Calu3 (cell line): ENCODE measurements at regions of chr3 and their contacts with region 1.

Region 1: GRCh38 chr3:188164248-188164687 is 10.3 kb downstream of the LPP start:
- DNase-seq: peak; percentile 90
- H3K4me3 Mint-ChIP-seq: peak overlapping the region; percentile 54
- H3K27ac Mint-ChIP-seq: peak overlapping the region; percentile 87
- H3K4me1 Mint-ChIP-seq: peaks cover 76% of the 10 kb centered on the region
- H3K27me3 Mint-ChIP-seq: no peaks in the 10 kb centered on the region
- CTCF ChIP-seq: no peak

Region 2: DNA sequence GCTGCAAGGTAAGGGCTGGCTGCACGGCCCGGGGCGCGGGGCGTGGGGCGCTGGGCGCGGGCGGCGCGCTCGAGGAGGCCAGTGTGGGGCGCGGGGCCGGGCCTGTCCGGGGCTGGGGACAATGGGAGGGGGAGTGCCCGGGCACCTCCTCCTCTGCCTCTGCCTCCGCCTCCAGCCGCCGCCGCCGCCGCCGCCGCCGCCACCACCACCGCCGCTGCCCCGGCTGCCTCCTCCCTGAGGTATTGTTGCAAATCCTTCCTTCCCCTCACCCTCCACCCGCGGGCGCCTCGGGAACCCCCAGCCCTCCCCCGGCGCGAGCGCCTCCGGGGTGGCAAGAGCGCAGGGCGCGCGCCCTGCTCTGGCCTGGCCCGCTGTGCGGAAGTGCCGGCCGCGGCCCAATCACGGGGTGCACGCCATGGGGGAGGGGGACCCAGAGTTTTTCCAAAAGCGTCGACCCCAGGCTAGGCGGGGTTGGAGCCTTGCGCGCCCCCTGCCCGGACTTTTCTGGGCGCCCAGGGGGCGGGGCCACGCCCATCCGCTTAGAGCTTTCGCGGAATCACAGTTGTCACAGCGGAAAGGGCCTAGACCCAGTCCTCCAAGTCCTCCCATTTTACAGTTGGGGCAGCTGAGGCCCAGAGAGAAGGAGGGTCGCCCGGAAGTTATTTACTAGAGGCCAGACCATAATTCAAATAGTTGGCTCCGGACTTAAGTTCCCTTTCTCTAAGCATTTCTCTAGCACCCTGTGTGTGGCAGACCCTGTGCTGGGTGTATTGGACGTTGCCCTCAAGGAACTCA is 10.1 kb before region 1 on chr3 and contains the start of gene LPP:
- CTCF ChIA-PET with region 1: interaction called, 36 read pairs
- intact Hi-C with region 1: no loop called
- DNase-seq: peak; percentile 97
- H3K4me3 Mint-ChIP-seq: peak within 1 kb of the TSS; percentile 72
- H3K27ac Mint-ChIP-seq: peak within 1 kb of the TSS; percentile 86
- H3K4me1 Mint-ChIP-seq: peaks cover 56% of the 10 kb centered on the region
- H3K27me3 Mint-ChIP-seq: no peaks in the 10 kb centered on the region
- CTCF ChIP-seq: peak; percentile 21
- total RNA-seq, gene LPP: 219 and 264 TPM in 2 replicates

Region 3: DNA sequence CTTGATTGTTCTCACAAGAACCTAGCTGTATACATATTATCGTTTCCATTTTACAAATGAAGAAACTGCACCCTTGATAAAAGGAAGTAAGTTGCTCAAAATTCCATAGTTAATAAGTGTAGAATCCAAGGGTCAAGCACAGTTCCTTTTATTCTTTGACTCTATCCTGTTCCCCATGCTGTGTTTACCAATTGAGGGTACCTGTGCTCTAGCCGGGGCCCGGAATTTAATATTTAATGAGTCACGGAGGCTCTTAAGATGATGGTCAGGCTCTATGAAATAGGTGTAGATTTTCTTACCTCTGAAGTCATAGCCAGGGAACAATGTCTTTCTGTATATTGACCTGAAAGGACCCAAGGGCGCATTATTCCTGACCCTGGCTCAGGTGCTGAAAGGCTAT is 54.9 kb after region 1 on chr3:
- CTCF ChIA-PET with region 1: interaction called, 7 read pairs
- intact Hi-C with region 1: loop called (anchors 2 kb)
- DNase-seq: peak; percentile 80
- H3K4me3 Mint-ChIP-seq: no peak overlapping the region
- H3K27ac Mint-ChIP-seq: peak overlapping the region; percentile 62
- H3K4me1 Mint-ChIP-seq: peaks cover 88% of the 10 kb centered on the region
- H3K27me3 Mint-ChIP-seq: no peaks in the 10 kb centered on the region
- CTCF ChIP-seq: no peak

Region 4: GRCh38 chr3:188270423-188270972 is 106.2 kb after region 1 on chr3:
- CTCF ChIA-PET with region 1: interaction called, 6 read pairs
- intact Hi-C with region 1: loop called (anchors 1 kb)
- DNase-seq: peak; percentile 80
- H3K4me3 Mint-ChIP-seq: peak overlapping the region; percentile 24
- H3K27ac Mint-ChIP-seq: peak overlapping the region; percentile 88
- H3K4me1 Mint-ChIP-seq: peaks cover 55% of the 10 kb centered on the region
- H3K27me3 Mint-ChIP-seq: no peaks in the 10 kb centered on the region
- CTCF ChIP-seq: no peak

Region 5: DNA sequence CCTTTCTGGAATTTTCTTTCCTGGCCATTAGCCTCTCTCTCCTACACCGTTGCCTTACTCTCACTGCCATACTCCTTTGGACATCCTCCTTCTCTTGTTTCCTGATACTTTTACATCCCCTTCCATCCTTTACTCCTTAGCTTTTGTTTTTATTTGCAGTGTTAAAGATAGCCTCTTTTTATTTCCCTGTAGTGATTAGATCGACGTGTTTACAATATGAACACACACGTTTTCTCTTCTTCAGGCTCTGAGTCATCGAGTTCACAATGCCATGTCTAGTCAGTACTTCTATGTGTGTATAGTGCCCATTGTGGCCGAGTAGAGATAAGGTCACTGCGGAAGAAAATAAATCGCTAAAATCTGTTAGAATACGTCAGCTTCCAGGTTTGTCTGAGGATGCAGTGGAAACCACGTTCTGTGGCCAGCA is 198.2 kb after region 1 on chr3:
- CTCF ChIA-PET with region 1: no interaction called
- intact Hi-C with region 1: loop called (anchors 2 kb)
- DNase-seq: peak; percentile 66
- H3K4me3 Mint-ChIP-seq: peak overlapping the region; percentile 0
- H3K27ac Mint-ChIP-seq: peak overlapping the region; percentile 23
- H3K4me1 Mint-ChIP-seq: peaks cover 44% of the 10 kb centered on the region
- H3K27me3 Mint-ChIP-seq: no peaks in the 10 kb centered on the region
- CTCF ChIP-seq: no peak

Region 6: DNA sequence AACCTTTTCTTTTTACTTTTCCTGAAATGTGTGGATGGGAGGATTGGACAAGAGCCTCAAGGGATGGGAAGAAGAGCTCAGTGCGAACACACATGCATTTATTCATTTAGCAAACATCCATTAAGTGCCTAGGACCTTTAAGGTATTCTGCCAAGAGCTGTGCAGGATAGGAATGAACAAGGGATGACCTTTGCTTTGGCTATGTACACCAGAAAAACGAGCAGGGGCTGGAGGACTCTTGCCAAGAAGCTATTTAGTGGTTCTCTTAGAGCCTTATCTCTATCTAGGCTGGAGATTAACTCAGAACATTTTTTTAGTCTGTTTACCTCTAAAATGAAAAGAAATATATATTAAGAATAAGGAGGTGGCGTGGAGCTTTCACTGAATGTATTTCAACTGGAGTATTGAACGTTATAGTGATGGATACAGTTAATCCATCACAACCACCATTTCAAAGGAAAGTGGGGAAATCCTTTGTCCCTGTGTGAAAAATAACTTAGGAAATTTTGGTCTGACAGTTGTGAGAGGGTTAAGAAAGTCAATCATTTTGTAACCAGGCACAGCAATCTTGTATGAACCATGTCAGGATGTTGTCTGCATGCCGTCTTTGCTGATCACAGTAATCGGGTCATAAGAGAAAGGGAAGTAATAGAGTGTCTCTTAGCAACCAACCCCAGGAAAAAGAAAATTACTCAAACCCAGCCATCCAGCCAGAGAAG is 268.7 kb after region 1 on chr3:
- CTCF ChIA-PET with region 1: no interaction called
- intact Hi-C with region 1: loop called (anchors 5 kb)
- DNase-seq: peak; percentile 34
- H3K4me3 Mint-ChIP-seq: peak overlapping the region; percentile 37
- H3K27ac Mint-ChIP-seq: peak overlapping the region; percentile 49
- H3K4me1 Mint-ChIP-seq: peaks cover 66% of the 10 kb centered on the region
- H3K27me3 Mint-ChIP-seq: no peaks in the 10 kb centered on the region
- CTCF ChIP-seq: no peak